ENCODE measurements at regions of chr2 and their contacts with region 1.

Region 1: GRCh38 chr2:61016808-61017555 is 538 bp upstream of the PEX13 start:
- DNase-seq: peak; percentile 30 to 81 (median 67)
- ATAC-seq: peak; percentile 69
- H3K4me3 ChIP-seq: peak overlapping the region; percentile 80 to 99
- H3K4me3 Mint-ChIP-seq: peak overlapping the region; percentile 99
- H3K27ac ChIP-seq: peak overlapping the region; percentile 69 to 84
- H3K27ac Mint-ChIP-seq: peak overlapping the region; percentile 95
- H3K4me1 ChIP-seq: peaks cover 21% of the 10 kb centered on the region
- H3K4me1 Mint-ChIP-seq: peaks cover 46% of the 10 kb centered on the region
- H3K27me3 ChIP-seq: no peaks in the 10 kb centered on the region
- H3K27me3 Mint-ChIP-seq: no peaks in the 10 kb centered on the region
- CTCF ChIP-seq: no peak

Region 2: GRCh38 chr2:60818272-60818671 is 198.7 kb before region 1 on chr2:
- CTCF ChIA-PET with region 1: no interaction called
- POLR2A ChIA-PET with region 1: no interaction called
- intact Hi-C with region 1: loop called in 1 of 2 experiments (anchors 1 kb)
- DNase-seq: peak in 5 of 9 experiments; percentile 40 to 70 (median 50)
- ATAC-seq: no peak
- H3K4me3 ChIP-seq: no peak overlapping the region
- H3K4me3 Mint-ChIP-seq: no peak overlapping the region
- H3K27ac ChIP-seq: peak overlapping the region in 1 of 2 experiments; percentile 83
- H3K27ac Mint-ChIP-seq: peak overlapping the region; percentile 78
- H3K4me1 ChIP-seq: peaks cover 32% of the 10 kb centered on the region
- H3K4me1 Mint-ChIP-seq: peaks cover 43% of the 10 kb centered on the region
- H3K27me3 ChIP-seq: no peaks in the 10 kb centered on the region
- H3K27me3 Mint-ChIP-seq: peaks cover 5% of the 10 kb centered on the region
- CTCF ChIP-seq: peak; percentile 19

Region 3: GRCh38 chr2:61065715-61066709 is 49.0 kb after region 1 on chr2 and contains the start of gene SANBR:
- CTCF ChIA-PET with region 1: no interaction called
- POLR2A ChIA-PET with region 1: interaction called, 3 read pairs
- intact Hi-C with region 1: loop called (anchors 1 to 2 kb)
- DNase-seq: peak; percentile 65 to 92 (median 79)
- ATAC-seq: peak; percentile 97
- H3K4me3 ChIP-seq: peak within 1 kb of the TSS; percentile 50 to 59
- H3K4me3 Mint-ChIP-seq: peak within 1 kb of the TSS; percentile 94
- H3K27ac ChIP-seq: no peak within 1 kb of the TSS
- H3K27ac Mint-ChIP-seq: peak within 1 kb of the TSS; percentile 82
- H3K4me1 ChIP-seq: peaks cover 4% of the 10 kb centered on the region
- H3K4me1 Mint-ChIP-seq: peaks cover 7% of the 10 kb centered on the region
- H3K27me3 ChIP-seq: no peaks in the 10 kb centered on the region
- H3K27me3 Mint-ChIP-seq: no peaks in the 10 kb centered on the region
- CTCF ChIP-seq: no peak
- total RNA-seq, gene SANBR: 0.52 to 0.67 TPM

Region 4: GRCh38 chr2:61144697-61145268 is 127.8 kb after region 1 on chr2:
- CTCF ChIA-PET with region 1: no interaction called
- POLR2A ChIA-PET with region 1: interaction called, 3 read pairs
- intact Hi-C with region 1: loop called (anchors 1 kb)
- DNase-seq: peak; percentile 80 to 98 (median 93)
- ATAC-seq: peak; percentile 94
- H3K4me3 ChIP-seq: peak overlapping the region; percentile 77 to 94
- H3K4me3 Mint-ChIP-seq: peak overlapping the region; percentile 94
- H3K27ac ChIP-seq: peak overlapping the region; percentile 68 to 85
- H3K27ac Mint-ChIP-seq: peak overlapping the region; percentile 95
- H3K4me1 ChIP-seq: peaks cover 5% of the 10 kb centered on the region
- H3K4me1 Mint-ChIP-seq: peaks cover 15% of the 10 kb centered on the region
- H3K27me3 ChIP-seq: no peaks in the 10 kb centered on the region
- H3K27me3 Mint-ChIP-seq: no peaks in the 10 kb centered on the region
- CTCF ChIP-seq: no peak

Region 5: GRCh38 chr2:61764035-61764800 is 747.2 kb after region 1 on chr2:
- CTCF ChIA-PET with region 1: no interaction called
- POLR2A ChIA-PET with region 1: no interaction called
- intact Hi-C with region 1: loop called in 1 of 2 experiments (anchors 1 kb)
- DNase-seq: peak; percentile 91 to 99 (median 94)
- ATAC-seq: peak; percentile 97
- H3K4me3 ChIP-seq: peak overlapping the region; percentile 90 to 91
- H3K4me3 Mint-ChIP-seq: peak overlapping the region; percentile 96
- H3K27ac ChIP-seq: peak overlapping the region; percentile 99 to 100
- H3K27ac Mint-ChIP-seq: peak overlapping the region; percentile 98
- H3K4me1 ChIP-seq: no peaks in the 10 kb centered on the region
- H3K4me1 Mint-ChIP-seq: peaks cover 12% of the 10 kb centered on the region
- H3K27me3 ChIP-seq: no peaks in the 10 kb centered on the region
- H3K27me3 Mint-ChIP-seq: no peaks in the 10 kb centered on the region
- CTCF ChIP-seq: no peak

Region 6: GRCh38 chr2:61905372-61906185 is 888.6 kb after region 1 on chr2 and contains the start of gene COMMD1:
- CTCF ChIA-PET with region 1: no interaction called
- POLR2A ChIA-PET with region 1: no interaction called
- intact Hi-C with region 1: loop called in 1 of 2 experiments (anchors 10 kb)
- DNase-seq: peak; percentile 58 to 89 (median 79)
- ATAC-seq: peak; percentile 99
- H3K4me3 ChIP-seq: peak within 1 kb of the TSS; percentile 63 to 79
- H3K4me3 Mint-ChIP-seq: peak within 1 kb of the TSS; percentile 97
- H3K27ac ChIP-seq: peak within 1 kb of the TSS; percentile 43 to 59
- H3K27ac Mint-ChIP-seq: peak within 1 kb of the TSS; percentile 90
- H3K4me1 ChIP-seq: peaks cover 16% of the 10 kb centered on the region
- H3K4me1 Mint-ChIP-seq: peaks cover 34% of the 10 kb centered on the region
- H3K27me3 ChIP-seq: no peaks in the 10 kb centered on the region
- H3K27me3 Mint-ChIP-seq: no peaks in the 10 kb centered on the region
- CTCF ChIP-seq: no peak
- total RNA-seq, gene COMMD1: 8.8 to 11.2 TPM